Stomach (tissue), 19 donors: ENCODE measurements at regions of chr15 and their contacts with region 1.

Region 1: DNA sequence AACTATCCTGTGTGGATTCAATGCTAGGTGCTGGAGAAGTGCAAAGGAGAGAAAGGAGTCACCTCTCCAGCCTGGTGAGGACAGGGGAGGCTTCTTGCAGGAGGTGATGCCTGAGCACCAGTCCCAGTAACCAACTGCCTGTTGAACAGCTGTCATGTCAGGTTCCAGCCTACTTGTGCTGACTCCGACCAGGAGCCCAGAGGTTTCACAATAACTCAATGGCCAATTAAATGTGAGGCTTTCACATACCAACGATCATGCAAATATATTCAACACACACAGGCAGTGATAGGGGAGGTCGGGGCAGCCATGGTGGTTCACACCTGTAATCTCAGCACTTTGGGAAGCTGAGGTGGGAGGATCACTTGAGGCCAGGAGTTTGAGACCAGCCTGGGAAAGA is 7.7 kb downstream of the SORD start:
- DNase-seq: no peak
- H3K4me3 ChIP-seq: no peak overlapping the region
- H3K27ac ChIP-seq: no peak overlapping the region
- H3K4me1 ChIP-seq: peaks cover 6 to 22% (median 12%) of the 10 kb centered on the region in 4 donors
- H3K27me3 ChIP-seq: no peaks in the 10 kb centered on the region
- CTCF ChIP-seq: no peak
- EP300 ChIP-seq: no peak
- POLR2A ChIP-seq: no peak

Region 2: GRCh38 chr15:44861439-44861910 is 169.3 kb before region 1 on chr15:
- intact Hi-C with region 1: loop called (anchors 10 kb)
- DNase-seq: no peak
- H3K4me3 ChIP-seq: no peak overlapping the region
- H3K27ac ChIP-seq: no peak overlapping the region
- H3K4me1 ChIP-seq: no peaks in the 10 kb centered on the region
- H3K27me3 ChIP-seq: no peaks in the 10 kb centered on the region
- CTCF ChIP-seq: no peak
- EP300 ChIP-seq: no peak
- POLR2A ChIP-seq: no peak